ENCODE measurements at regions of chr1 and their contacts with region 1.

Region 1: GRCh38 chr1:47113178-47113577 is 24.1 kb upstream of the CYP4A22 start:
- DNase-seq: no peak
- H3K4me3 ChIP-seq: no peak overlapping the region
- H3K27ac ChIP-seq: no peak overlapping the region
- H3K4me1 ChIP-seq: no peaks in the 10 kb centered on the region
- H3K27me3 ChIP-seq: no peaks in the 10 kb centered on the region
- CTCF ChIP-seq: no peak

Region 2: DNA sequence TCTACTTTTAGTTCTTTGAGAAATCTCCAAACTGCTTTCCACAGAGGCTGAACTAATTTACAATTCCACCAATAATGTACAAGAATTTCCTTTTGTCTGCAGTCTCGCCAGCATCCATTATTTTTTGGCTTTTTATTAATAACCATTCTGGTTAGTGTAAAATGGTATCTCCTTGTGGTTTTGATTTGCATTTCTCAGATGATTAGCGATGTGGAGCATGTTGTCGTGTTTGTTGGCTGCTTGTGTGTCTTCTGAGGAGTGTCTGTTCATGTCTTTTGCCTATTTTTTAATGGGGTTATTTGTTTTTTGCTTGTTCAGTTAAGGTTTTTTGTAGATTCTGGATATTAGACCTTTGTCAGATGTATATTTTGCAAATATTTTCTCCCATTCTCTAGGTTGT is 1178.2 kb before region 1 on chr1:
- CTCF ChIA-PET with region 1: no interaction called
- POLR2A ChIA-PET with region 1: interaction called, 12 read pairs
- intact Hi-C with region 1: no loop called
- DNase-seq: no peak
- H3K4me3 ChIP-seq: no peak overlapping the region
- H3K27ac ChIP-seq: no peak overlapping the region
- H3K4me1 ChIP-seq: no peaks in the 10 kb centered on the region
- H3K27me3 ChIP-seq: no peaks in the 10 kb centered on the region
- CTCF ChIP-seq: no peak

Region 3: GRCh38 chr1:47137925-47138615 is 24.9 kb after region 1 on chr1:
- CTCF ChIA-PET with region 1: no interaction called
- POLR2A ChIA-PET with region 1: no interaction called
- intact Hi-C with region 1: no loop called
- DNase-seq: no peak
- H3K4me3 ChIP-seq: no peak overlapping the region
- H3K27ac ChIP-seq: no peak overlapping the region
- H3K4me1 ChIP-seq: no peaks in the 10 kb centered on the region
- H3K27me3 ChIP-seq: no peaks in the 10 kb centered on the region
- CTCF ChIP-seq: no peak

Region 4: GRCh38 chr1:47192458-47193384 is 79.5 kb after region 1 on chr1:
- CTCF ChIA-PET with region 1: no interaction called
- POLR2A ChIA-PET with region 1: no interaction called
- intact Hi-C with region 1: no loop called
- DNase-seq: peak; percentile 57 to 69
- H3K4me3 ChIP-seq: no peak overlapping the region
- H3K27ac ChIP-seq: no peak overlapping the region
- H3K4me1 ChIP-seq: no peaks in the 10 kb centered on the region
- H3K27me3 ChIP-seq: no peaks in the 10 kb centered on the region
- CTCF ChIP-seq: peak; percentile 95

Region 5: DNA sequence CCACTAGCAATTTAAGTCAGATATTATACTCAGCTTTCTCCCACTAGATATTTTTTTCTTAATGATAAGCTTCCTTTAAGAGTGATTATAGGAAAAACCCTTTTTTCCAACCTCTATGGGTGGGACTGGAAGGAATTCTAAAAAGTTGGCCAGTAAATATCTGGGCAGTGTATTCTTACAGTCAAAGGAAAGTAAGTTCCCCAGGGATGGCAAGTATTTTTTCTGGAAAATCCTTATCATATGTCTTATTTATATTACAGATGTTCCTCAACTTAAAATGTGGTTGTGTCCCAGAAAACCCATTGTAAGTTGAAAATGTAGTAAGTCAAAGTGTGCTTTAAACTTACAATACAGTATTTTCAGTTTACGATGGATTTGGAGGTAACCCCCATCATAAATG is 249.7 kb after region 1 on chr1:
- CTCF ChIA-PET with region 1: no interaction called
- POLR2A ChIA-PET with region 1: no interaction called
- intact Hi-C with region 1: no loop called
- DNase-seq: no peak
- H3K4me3 ChIP-seq: no peak overlapping the region
- H3K27ac ChIP-seq: no peak overlapping the region
- H3K4me1 ChIP-seq: no peaks in the 10 kb centered on the region
- H3K27me3 ChIP-seq: no peaks in the 10 kb centered on the region
- CTCF ChIP-seq: no peak